Thyroid gland (tissue), 4 donors: ENCODE measurements at regions of chr3 and their contacts with region 1.

Region 1: GRCh38 chr3:47989981-47990440 is 26.2 kb downstream of the MAP4 start:
- DNase-seq: peak; percentile 74 to 81
- H3K4me3 ChIP-seq: no peak overlapping the region
- H3K27ac ChIP-seq: no peak overlapping the region
- H3K4me1 ChIP-seq: peaks cover 0 to 5% of the 10 kb centered on the region in 2 donors
- H3K27me3 ChIP-seq: no peaks in the 10 kb centered on the region
- CTCF ChIP-seq: peak; percentile 73 to 91 (median 86)
- POLR2A ChIP-seq: no peak

Region 2: DNA sequence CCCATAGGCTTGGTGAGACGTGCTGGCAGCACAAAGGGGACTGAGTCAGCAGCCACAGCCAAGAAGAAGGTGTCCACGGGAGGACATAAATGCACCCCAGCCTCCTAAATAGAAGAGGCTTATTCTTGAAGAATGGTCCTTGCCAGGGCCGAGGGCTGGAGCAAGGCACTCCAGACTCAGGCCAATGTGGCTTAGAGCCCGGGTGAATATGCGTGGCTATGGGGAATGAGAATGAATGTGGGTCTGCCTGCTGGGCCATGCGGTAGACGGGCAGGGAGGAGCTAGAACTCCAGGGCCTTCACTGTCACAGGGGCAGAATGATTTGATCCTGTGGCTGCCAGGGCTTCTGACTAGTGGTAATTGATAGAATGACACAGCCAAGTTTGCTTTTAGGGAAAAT is 153.0 kb before region 1 on chr3:
- intact Hi-C with region 1: loop called (anchors 5 kb)
- DNase-seq: no peak
- H3K4me3 ChIP-seq: no peak overlapping the region
- H3K27ac ChIP-seq: no peak overlapping the region
- H3K4me1 ChIP-seq: no peaks in the 10 kb centered on the region
- H3K27me3 ChIP-seq: no peaks in the 10 kb centered on the region
- CTCF ChIP-seq: no peak
- POLR2A ChIP-seq: no peak